ENCODE measurements at regions of chr11 and their contacts with region 1.

Region 1: GRCh38 chr11:72413914-72414628 is 20.3 kb downstream of the CLPB start:
- DNase-seq: peak; percentile 82 to 86
- ATAC-seq: peak; percentile 64 to 89 (median 84)
- H3K4me3 ChIP-seq: no peak overlapping the region
- H3K27ac ChIP-seq: peak overlapping the region in 3 of 10 donors; percentile 11 to 18 (median 15)
- H3K4me1 ChIP-seq: peaks cover 0 to 45% (median 22%) of the 10 kb centered on the region in 9 donors
- H3K27me3 ChIP-seq: no peaks in the 10 kb centered on the region
- CTCF ChIP-seq: peak; percentile 70 to 95 (median 89)

Region 2: DNA sequence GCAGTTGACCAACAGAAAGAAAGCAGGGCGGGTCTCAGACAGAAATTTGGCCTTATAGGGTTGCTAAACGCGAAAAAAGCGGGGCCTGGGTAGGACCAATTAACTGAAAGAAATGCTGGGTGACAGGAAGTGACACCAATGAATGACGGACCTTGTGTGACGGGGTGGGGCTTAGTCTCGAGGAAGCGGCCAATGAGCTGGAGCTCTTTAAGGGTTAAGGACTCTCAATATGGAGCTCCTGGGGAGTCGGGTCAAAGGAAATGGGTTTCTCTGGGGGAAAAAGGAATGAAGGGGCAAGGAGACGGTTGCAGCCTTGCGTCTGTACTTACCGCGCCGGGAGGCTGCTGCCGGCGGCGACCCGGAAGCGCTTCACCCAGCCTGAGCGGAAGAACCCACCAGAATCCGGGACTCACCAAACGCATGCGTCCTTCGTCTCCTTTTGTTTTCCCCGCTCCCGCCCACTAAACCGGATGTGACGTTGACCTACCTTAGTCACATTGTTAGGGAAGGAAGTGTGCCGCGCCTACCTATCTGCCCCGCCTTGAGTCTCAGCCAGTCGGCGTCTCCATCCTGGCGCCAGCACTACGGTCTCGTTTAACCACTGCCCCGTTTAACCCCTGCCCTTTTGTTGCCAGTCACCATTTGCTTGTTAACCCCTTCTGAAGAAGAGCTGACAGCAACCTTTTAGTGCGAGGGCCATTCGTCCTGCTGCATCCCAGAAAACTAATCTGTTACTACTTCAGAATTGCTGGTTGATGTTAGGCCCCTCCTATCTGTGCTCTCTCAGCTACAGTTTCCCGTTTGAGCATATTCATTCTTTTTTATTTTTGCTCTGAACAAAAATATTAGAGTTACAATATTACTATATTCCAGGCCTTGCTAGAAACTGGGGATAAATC is 301.5 kb before region 1 on chr11 and contains the start of gene ANAPC15:
- intact Hi-C with region 1: loop called in 1 of 10 experiments (anchors 10 kb)
- DNase-seq: peak; percentile 93 to 100
- ATAC-seq: peak; percentile 94 to 98 (median 96)
- H3K4me3 ChIP-seq: peak within 1 kb of the TSS; percentile 37 to 84 (median 58)
- H3K27ac ChIP-seq: peak within 1 kb of the TSS; percentile 88 to 100 (median 96)
- H3K4me1 ChIP-seq: peaks cover 4 to 21% (median 15%) of the 10 kb centered on the region in 9 donors
- H3K27me3 ChIP-seq: peaks cover 0 to 10% (median 0%) of the 10 kb centered on the region in 7 donors
- CTCF ChIP-seq: peak in 2 of 9 donors; percentile 11 to 16
- total RNA-seq, gene ANAPC15: 31.8 to 58.3 (median 46.8) TPM

Region 3: DNA sequence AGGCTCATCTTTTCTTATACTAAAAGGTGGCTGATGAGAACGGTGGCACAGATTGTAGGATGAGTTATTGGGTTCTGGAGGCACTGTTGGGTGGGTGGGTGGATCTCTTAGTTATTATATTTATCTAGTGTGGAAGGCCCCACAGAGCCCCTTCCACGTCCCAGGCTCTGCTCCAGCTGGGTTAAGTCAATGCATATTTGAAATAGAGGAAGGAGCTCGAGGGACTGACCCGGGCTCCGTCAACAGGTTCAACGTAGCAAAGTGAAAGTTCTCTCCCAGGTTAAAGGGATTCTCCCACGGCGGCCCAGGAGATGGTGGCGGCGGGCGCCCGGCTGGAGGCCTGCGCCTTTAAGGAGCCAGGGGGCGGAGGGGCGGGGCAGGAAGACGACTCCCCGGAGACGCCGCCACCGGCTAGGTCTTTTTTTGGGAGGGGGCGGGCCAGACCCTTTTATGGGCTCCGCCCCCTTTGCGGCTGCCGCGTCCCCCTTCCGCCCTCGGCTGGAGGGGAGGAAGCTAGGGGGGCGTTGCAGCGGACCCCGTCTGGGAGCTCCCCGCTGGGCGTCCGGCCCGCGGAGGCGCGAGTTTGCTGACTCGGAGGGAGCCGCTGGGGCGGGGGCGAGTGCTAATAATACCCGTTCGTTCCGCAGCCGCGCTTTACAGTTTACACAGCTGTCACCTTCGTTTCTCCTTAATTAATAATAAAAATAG is 191.0 kb before region 1 on chr11:
- intact Hi-C with region 1: loop called in 3 of 10 experiments (anchors 5 to 10 kb)
- DNase-seq: peak; percentile 95 to 96
- ATAC-seq: peak; percentile 89 to 96 (median 93)
- H3K4me3 ChIP-seq: peak overlapping the region; percentile 57 to 94 (median 84)
- H3K27ac ChIP-seq: peak overlapping the region; percentile 94 to 100 (median 99)
- H3K4me1 ChIP-seq: peaks cover 5 to 55% (median 21%) of the 10 kb centered on the region in 9 donors
- H3K27me3 ChIP-seq: peaks cover 0 to 5% (median 0%) of the 10 kb centered on the region in 7 donors
- CTCF ChIP-seq: peak in 8 of 9 donors; percentile 21 to 67 (median 52)

Region 4: GRCh38 chr11:72238040-72238450 is 176.0 kb before region 1 on chr11:
- intact Hi-C with region 1: loop called in 2 of 10 experiments (anchors 5 to 10 kb)
- DNase-seq: peak in 1 of 2 donors; percentile 33
- ATAC-seq: peak; percentile 12 to 60 (median 34)
- H3K4me3 ChIP-seq: no peak overlapping the region
- H3K27ac ChIP-seq: no peak overlapping the region
- H3K4me1 ChIP-seq: peaks cover 10 to 58% (median 28%) of the 10 kb centered on the region in 9 donors
- H3K27me3 ChIP-seq: peaks cover 0 to 47% (median 28%) of the 10 kb centered on the region in 7 donors
- CTCF ChIP-seq: peak; percentile 41 to 77 (median 67)

Region 5: GRCh38 chr11:72287293-72287692 is 126.8 kb before region 1 on chr11:
- intact Hi-C with region 1: loop called in 5 of 10 experiments (anchors 5 to 10 kb)
- DNase-seq: no peak
- ATAC-seq: no peak
- H3K4me3 ChIP-seq: no peak overlapping the region
- H3K27ac ChIP-seq: no peak overlapping the region
- H3K4me1 ChIP-seq: no peaks in the 10 kb centered on the region
- H3K27me3 ChIP-seq: peaks cover 0 to 34% (median 19%) of the 10 kb centered on the region in 7 donors
- CTCF ChIP-seq: no peak

Region 6: GRCh38 chr11:72293910-72294615 is 120.0 kb before region 1 on chr11:
- intact Hi-C with region 1: loop called in 5 of 10 experiments (anchors 5 to 10 kb)
- DNase-seq: no peak
- ATAC-seq: peak in 2 of 8 donors; percentile 21 to 39
- H3K4me3 ChIP-seq: no peak overlapping the region
- H3K27ac ChIP-seq: no peak overlapping the region
- H3K4me1 ChIP-seq: no peaks in the 10 kb centered on the region
- H3K27me3 ChIP-seq: no peaks in the 10 kb centered on the region
- CTCF ChIP-seq: no peak